Activated naive CD4-positive, alpha-beta T cell treated with anti-CD3 and anti-CD28 coated beads, Interleukin-2, amount 10 ng/mL, durations not matched to agents 7 days and 5 days (primary cell): ENCODE measurements at regions of chr7 and their contacts with region 1.

Region 1: GRCh38 chr7:50266635-50267386 is 37.7 kb upstream of the IKZF1 start:
- DNase-seq: peak; percentile 88
- H3K4me3 Mint-ChIP-seq: peak overlapping the region; percentile 64
- H3K27ac Mint-ChIP-seq: peak overlapping the region; percentile 99
- H3K4me1 Mint-ChIP-seq: peaks cover 92% of the 10 kb centered on the region
- H3K27me3 Mint-ChIP-seq: no peaks in the 10 kb centered on the region

Region 2: DNA sequence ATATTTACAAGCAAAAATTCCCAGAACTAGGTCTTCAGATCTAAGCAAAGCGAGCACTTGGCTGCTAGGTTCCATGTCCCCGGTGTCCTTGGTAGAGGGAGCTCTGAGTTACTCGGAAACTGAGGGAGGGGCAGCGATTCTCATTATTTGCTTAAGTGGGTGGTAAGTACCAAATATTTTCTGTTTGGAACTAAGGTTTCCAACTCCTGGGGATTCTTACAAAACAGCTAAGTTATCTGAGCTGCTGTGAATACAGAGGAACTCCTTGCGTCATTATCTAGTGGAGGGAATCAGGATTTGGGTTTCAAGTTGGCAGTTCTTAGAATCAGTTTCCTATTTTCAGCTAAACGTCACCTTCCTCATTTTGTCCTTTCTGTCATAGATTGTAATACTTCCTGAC is 39.1 kb before region 1 on chr7:
- CTCF ChIA-PET with region 1: interaction called, 14 read pairs
- DNase-seq: no peak
- H3K4me3 Mint-ChIP-seq: peak overlapping the region; percentile 66
- H3K27ac Mint-ChIP-seq: peak overlapping the region; percentile 89
- H3K4me1 Mint-ChIP-seq: peaks cover 45% of the 10 kb centered on the region
- H3K27me3 Mint-ChIP-seq: no peaks in the 10 kb centered on the region

Region 3: DNA sequence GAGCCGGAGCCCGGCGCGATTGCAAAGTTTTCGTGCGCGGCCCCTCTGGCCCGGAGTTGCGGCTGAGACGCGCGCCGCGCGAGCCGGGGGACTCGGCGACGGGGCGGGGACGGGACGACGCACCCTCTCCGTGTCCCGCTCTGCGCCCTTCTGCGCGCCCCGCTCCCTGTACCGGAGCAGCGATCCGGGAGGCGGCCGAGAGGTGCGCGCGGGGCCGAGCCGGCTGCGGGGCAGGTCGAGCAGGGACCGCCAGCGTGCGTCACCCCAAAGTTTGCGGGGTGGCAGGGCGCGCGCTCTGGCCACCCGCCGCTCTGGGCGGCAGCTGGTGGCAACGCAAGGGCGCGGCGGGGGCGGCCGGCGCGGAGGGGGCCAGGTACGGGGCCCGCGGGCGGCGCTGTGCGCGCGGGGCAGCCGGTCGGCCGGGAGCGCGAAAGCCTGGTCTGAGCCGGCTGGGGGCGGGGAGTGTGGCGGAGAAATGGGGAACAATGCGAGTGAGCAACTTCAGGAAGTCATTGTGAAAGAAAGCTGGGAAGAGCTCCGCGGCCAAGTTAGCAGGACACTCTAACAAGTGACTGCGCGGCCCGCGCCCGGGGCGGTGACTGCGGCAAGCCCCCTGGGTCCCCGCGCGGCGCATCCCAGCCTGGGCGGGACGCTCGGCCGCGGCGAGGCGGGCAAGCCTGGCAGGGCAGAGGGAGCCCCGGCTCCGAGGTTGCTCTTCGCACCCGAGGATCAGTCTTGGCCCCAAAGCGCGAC is 37.5 kb after region 1 on chr7 and contains the start of gene IKZF1:
- CTCF ChIA-PET with region 1: interaction called, 34 read pairs
- DNase-seq: peak; percentile 66
- H3K4me3 Mint-ChIP-seq: peak within 1 kb of the TSS; percentile 99
- H3K27ac Mint-ChIP-seq: peak within 1 kb of the TSS; percentile 99
- H3K4me1 Mint-ChIP-seq: peaks cover 40% of the 10 kb centered on the region
- H3K27me3 Mint-ChIP-seq: peaks cover 9% of the 10 kb centered on the region

Region 4: GRCh38 chr7:50317221-50317678 is 50.4 kb after region 1 on chr7:
- CTCF ChIA-PET with region 1: interaction called, 34 read pairs
- DNase-seq: peak; percentile 69
- H3K4me3 Mint-ChIP-seq: peak overlapping the region; percentile 99
- H3K27ac Mint-ChIP-seq: peak overlapping the region; percentile 99
- H3K4me1 Mint-ChIP-seq: peaks cover 96% of the 10 kb centered on the region
- H3K27me3 Mint-ChIP-seq: no peaks in the 10 kb centered on the region